OCI-LY7 (cell line): ENCODE measurements at regions of chr6 and their contacts with region 1.

Region 1: GRCh38 chr6:19851241-19852089 is 14.3 kb downstream of the ID4 start:
- DNase-seq: peak; percentile 72
- H3K4me3 ChIP-seq: no peak overlapping the region
- H3K27ac ChIP-seq: no peak overlapping the region
- H3K4me1 ChIP-seq: peaks cover 39% of the 10 kb centered on the region
- CTCF ChIP-seq: peak; percentile 97

Region 2: DNA sequence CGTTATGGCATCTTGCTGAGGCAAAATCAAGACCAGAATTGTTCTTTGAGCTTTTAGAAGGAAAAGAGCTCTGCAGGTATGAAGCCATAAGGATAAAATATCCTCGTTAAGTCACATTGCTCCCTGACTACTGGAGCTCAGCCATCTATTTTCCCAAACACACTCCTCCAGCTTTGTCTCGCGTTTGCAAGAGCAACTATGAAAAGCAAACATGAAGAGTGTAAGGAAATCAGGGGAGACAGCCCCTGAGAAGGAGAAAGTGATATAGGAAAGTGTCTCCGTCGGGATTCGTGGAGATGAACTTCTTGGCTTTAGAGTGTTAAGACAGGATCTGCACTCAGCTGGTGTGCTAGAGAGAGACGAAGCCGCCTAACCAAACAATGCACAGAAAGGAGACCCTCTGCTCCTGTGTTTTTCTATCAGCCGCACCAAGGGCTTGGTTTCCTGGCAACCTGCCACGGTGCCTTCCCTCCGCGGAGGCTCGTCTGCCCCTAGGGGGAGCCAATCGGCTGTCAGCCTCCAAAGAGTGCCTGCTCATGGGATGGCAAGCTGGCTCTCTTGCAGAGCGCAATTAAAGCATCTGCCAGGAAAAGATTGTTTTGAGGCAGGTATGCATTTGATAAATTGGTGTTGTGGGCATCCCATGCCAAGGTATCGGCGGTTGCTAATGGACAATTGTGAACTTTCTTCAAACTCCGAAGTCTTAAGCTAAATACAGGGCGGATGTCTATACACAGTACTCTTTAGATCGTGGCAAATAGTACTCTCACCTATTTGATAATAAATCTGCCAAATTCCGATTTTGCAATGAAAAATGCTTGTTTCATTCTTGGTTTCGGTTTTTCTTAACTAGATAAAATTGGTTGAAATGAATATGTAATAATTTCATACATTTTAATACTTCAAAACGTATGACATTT is 861.1 kb before region 1 on chr6:
- CTCF ChIA-PET with region 1: no interaction called
- POLR2A ChIA-PET with region 1: no interaction called
- intact Hi-C with region 1: loop called (anchors 5 kb)
- DNase-seq: peak; percentile 68
- H3K4me3 ChIP-seq: no peak overlapping the region
- H3K27ac ChIP-seq: no peak overlapping the region
- H3K4me1 ChIP-seq: no peaks in the 10 kb centered on the region
- CTCF ChIP-seq: peak; percentile 88

Region 3: GRCh38 chr6:19210849-19211590 is 640.4 kb before region 1 on chr6:
- CTCF ChIA-PET with region 1: no interaction called
- POLR2A ChIA-PET with region 1: no interaction called
- intact Hi-C with region 1: loop called (anchors 10 kb)
- DNase-seq: peak; percentile 47
- H3K4me3 ChIP-seq: no peak overlapping the region
- H3K27ac ChIP-seq: no peak overlapping the region
- H3K4me1 ChIP-seq: no peaks in the 10 kb centered on the region
- CTCF ChIP-seq: peak; percentile 74

Region 4: DNA sequence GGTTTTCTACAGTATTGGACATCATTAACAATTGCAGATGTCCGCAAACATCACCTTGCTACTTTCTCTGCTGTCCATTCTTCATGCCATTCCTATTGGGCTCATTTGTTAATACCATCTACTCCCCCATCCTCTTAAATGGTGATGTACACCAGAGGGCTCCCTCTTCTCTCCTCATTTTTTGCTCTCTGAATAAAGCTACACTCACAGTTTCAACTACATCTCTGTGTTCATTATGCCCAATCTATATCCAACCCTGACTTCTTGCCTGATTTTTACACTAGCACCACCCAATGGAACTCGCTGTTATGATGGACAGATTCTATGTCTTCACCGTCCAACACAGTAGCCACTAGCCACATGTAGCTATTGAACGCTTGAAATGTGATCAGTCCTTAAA is 302.4 kb before region 1 on chr6:
- CTCF ChIA-PET with region 1: no interaction called
- POLR2A ChIA-PET with region 1: interaction called, 4 read pairs
- intact Hi-C with region 1: loop called (anchors 5 kb)
- DNase-seq: peak; percentile 45
- H3K4me3 ChIP-seq: no peak overlapping the region
- H3K27ac ChIP-seq: no peak overlapping the region
- H3K4me1 ChIP-seq: peaks cover 18% of the 10 kb centered on the region
- CTCF ChIP-seq: peak; percentile 68

Region 5: DNA sequence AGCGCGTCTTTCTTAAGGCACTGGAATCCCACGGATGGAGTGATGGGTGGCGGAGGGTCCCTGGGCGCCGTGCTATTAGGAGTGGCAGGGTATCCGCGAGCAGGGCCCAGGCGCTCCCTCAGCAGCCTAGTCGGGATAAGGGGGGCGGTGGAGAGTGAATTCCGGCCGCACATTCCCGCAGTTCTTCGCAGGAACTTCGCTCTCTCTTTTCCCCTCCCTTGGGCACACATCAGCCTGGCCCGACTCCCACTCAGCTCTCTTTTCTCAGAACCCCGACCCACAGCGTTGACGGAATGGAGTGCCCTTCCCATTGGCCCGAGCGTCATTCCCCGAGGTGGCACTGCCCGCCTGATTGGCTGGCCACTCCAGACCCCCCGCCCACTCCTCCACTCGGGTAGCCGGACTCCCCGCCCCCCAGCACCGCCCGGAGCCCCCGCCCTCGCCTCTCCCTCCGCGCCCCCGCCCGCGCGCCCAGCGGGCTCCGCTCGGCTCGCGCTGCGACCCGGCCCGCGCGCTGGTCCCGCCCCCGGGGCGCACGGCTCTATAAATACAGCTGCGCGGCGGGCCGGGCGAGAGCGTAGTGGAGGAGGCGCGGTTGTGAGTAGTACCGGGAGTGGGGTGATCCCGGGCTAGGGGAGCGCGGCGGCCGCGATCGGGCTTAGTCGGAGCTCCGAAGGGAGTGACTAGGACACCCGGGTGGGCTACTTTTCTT is 14.5 kb before region 1 on chr6 and contains the start of gene ID4:
- CTCF ChIA-PET with region 1: no interaction called
- POLR2A ChIA-PET with region 1: interaction called, 21 read pairs
- intact Hi-C with region 1: no loop called
- DNase-seq: no peak
- H3K4me3 ChIP-seq: peak within 1 kb of the TSS; percentile 80
- H3K27ac ChIP-seq: peak within 1 kb of the TSS; percentile 96
- H3K4me1 ChIP-seq: peaks cover 41% of the 10 kb centered on the region
- CTCF ChIP-seq: no peak
- total RNA-seq, gene ID4: 2.0 and 2.1 TPM in 2 replicates

Region 6: DNA sequence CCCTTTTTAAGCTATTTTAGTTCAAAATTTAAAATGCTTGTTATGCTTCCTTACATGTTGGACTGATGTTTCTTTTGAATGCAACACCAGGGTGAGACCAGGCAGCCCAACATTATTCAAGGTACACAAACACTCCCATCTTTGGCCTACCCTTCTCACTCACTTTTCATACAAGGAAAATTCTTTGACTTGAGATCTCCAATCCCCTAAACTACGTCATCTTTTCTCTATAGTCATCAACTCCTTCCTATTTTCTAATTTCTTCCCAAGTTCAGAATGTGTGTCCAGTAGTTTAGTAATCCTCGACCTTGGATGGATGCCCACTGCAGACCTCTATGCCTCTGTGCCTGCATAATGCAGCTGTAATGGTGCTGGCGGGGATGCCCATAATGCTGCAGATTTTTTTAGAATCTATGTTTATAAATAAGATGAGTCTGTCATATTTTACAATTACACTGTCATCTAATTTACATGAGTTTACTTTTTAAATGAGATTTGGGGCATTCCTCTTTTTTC is 94.4 kb after region 1 on chr6:
- CTCF ChIA-PET with region 1: no interaction called
- POLR2A ChIA-PET with region 1: no interaction called
- intact Hi-C with region 1: no loop called
- DNase-seq: no peak
- H3K4me3 ChIP-seq: no peak overlapping the region
- H3K27ac ChIP-seq: no peak overlapping the region
- H3K4me1 ChIP-seq: no peaks in the 10 kb centered on the region
- CTCF ChIP-seq: no peak

Region 7: DNA sequence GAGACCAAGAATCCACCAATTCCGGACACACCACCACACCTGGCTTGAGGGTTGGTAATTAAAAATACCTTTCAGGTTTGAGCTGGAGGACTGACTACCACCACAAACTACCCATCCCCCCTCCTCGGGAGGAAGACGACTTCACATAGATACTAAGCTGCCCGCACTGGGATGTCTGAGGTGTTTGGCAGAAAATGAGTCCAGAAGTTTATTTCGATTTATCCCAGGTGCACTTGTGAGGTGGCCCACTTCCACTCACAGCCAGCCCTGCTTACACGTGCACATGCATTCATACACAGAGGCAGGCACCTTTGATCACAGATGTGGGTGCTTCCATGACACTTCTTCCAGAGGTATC is 172.8 kb after region 1 on chr6:
- CTCF ChIA-PET with region 1: no interaction called
- POLR2A ChIA-PET with region 1: no interaction called
- intact Hi-C with region 1: no loop called
- DNase-seq: no peak
- H3K4me3 ChIP-seq: no peak overlapping the region
- H3K27ac ChIP-seq: no peak overlapping the region
- H3K4me1 ChIP-seq: no peaks in the 10 kb centered on the region
- CTCF ChIP-seq: no peak

Region 8: GRCh38 chr6:20252311-20252710 is 400.8 kb after region 1 on chr6:
- CTCF ChIA-PET with region 1: no interaction called
- POLR2A ChIA-PET with region 1: no interaction called
- intact Hi-C with region 1: no loop called
- DNase-seq: no peak
- H3K4me3 ChIP-seq: no peak overlapping the region
- H3K27ac ChIP-seq: no peak overlapping the region
- H3K4me1 ChIP-seq: no peaks in the 10 kb centered on the region
- CTCF ChIP-seq: no peak